CD4-positive, alpha-beta memory T cell (primary cell): ENCODE measurements at regions of chr17 and their contacts with region 1.

Region 1: GRCh38 chr17:74457146-74457819 is 9.2 kb upstream of the CD300A start:
- DNase-seq: peak; percentile 58 to 70 (median 64)
- H3K4me3 ChIP-seq: no peak overlapping the region
- H3K4me3 Mint-ChIP-seq: peak overlapping the region in 5 of 8 donors; percentile 26 to 71 (median 36)
- H3K27ac ChIP-seq: no peak overlapping the region
- H3K27ac Mint-ChIP-seq: peak overlapping the region in 5 of 7 donors; percentile 43 to 77 (median 61)
- H3K4me1 ChIP-seq: peaks cover 56% of the 10 kb centered on the region
- H3K4me1 Mint-ChIP-seq: peaks cover 18 to 57% (median 37%) of the 10 kb centered on the region in 4 donors
- H3K27me3 ChIP-seq: no peaks in the 10 kb centered on the region
- H3K27me3 Mint-ChIP-seq: no peaks in the 10 kb centered on the region

Region 2: DNA sequence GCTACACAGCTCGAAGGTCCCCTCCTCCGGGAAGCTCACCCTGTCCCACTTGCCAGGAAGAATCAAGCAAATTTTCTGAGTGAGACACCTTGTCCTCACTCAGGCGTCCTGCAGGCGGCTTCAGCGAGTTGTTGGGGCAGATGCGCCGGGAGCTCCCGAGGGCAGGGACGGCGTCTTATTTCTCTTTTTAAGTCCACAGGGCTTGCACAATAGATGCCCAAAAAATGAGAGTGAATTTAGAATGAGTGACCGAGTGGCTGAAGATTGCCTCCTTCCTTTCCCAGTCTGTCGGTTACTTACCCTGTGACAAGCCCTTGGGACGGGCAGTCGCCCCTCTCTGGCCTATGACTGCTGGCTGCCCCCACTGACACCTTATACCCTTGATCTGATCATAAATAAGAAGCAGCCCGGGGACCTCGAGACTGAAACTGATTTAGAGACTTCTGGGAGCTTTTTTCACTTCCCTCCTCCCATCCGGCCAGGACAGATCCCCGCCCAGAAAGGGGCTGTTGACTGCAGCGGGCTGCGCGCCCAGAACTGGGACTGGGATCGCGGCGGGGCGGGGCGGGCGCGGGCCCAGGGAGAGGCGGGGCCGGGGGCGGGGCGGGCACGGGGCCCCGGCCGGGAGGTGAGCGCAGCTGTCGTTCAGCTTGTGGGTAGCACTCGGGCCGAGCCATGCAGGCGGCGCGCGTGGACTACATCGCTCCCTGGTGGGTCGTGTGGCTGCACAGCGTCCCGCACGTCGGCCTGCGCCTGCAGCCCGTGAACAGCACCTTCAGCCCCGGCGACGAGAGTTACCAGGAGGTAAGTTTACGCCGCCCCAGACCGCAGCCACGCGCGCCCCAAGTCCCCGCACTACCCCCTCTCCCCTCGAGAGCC is 244.1 kb before region 1 on chr17 and contains the start of gene TTYH2:
- CTCF ChIA-PET with region 1: interaction called, 4 read pairs
- POLR2A ChIA-PET with region 1: interaction called, 3 read pairs
- intact Hi-C with region 1: loop called (anchors 1 kb)
- DNase-seq: peak; percentile 65 to 83 (median 71)
- H3K4me3 ChIP-seq: peak within 1 kb of the TSS; percentile 58
- H3K4me3 Mint-ChIP-seq: peak within 1 kb of the TSS; percentile 83 to 97 (median 91)
- H3K27ac ChIP-seq: peak within 1 kb of the TSS; percentile 52
- H3K27ac Mint-ChIP-seq: peak within 1 kb of the TSS; percentile 84 to 97 (median 92)
- H3K4me1 ChIP-seq: peaks cover 59% of the 10 kb centered on the region
- H3K4me1 Mint-ChIP-seq: peaks cover 26 to 67% (median 46%) of the 10 kb centered on the region in 4 donors
- H3K27me3 ChIP-seq: no peaks in the 10 kb centered on the region
- H3K27me3 Mint-ChIP-seq: no peaks in the 10 kb centered on the region
- total RNA-seq, gene TTYH2: 40.5 to 42.4 TPM

Region 3: GRCh38 chr17:74368092-74369081 is 88.9 kb before region 1 on chr17:
- CTCF ChIA-PET with region 1: interaction called, 82 read pairs
- POLR2A ChIA-PET with region 1: interaction called, 4 read pairs
- intact Hi-C with region 1: loop called (anchors 1 kb)
- DNase-seq: peak; percentile 53 to 72 (median 60)
- H3K4me3 ChIP-seq: no peak overlapping the region
- H3K4me3 Mint-ChIP-seq: peak overlapping the region; percentile 21 to 82 (median 66)
- H3K27ac ChIP-seq: no peak overlapping the region
- H3K27ac Mint-ChIP-seq: peak overlapping the region in 1 of 7 donors; percentile 53
- H3K4me1 ChIP-seq: peaks cover 16% of the 10 kb centered on the region
- H3K4me1 Mint-ChIP-seq: peaks cover 7 to 17% (median 12%) of the 10 kb centered on the region in 4 donors
- H3K27me3 ChIP-seq: no peaks in the 10 kb centered on the region
- H3K27me3 Mint-ChIP-seq: peaks cover 3 to 4% of the 10 kb centered on the region in 2 donors

Region 4: GRCh38 chr17:74437702-74438101 is 19.6 kb before region 1 on chr17:
- CTCF ChIA-PET with region 1: interaction called, 34 read pairs
- POLR2A ChIA-PET with region 1: interaction called, 4 read pairs
- intact Hi-C with region 1: no loop called
- DNase-seq: no peak
- H3K4me3 ChIP-seq: no peak overlapping the region
- H3K4me3 Mint-ChIP-seq: peak overlapping the region in 1 of 8 donors; percentile 46
- H3K27ac ChIP-seq: no peak overlapping the region
- H3K27ac Mint-ChIP-seq: no peak overlapping the region
- H3K4me1 ChIP-seq: no peaks in the 10 kb centered on the region
- H3K4me1 Mint-ChIP-seq: peaks cover 0 to 1% (median 0%) of the 10 kb centered on the region in 4 donors
- H3K27me3 ChIP-seq: peaks cover 6% of the 10 kb centered on the region
- H3K27me3 Mint-ChIP-seq: peaks cover 14 to 26% of the 10 kb centered on the region in 2 donors

Region 5: GRCh38 chr17:74467221-74467951 is 10.1 kb after region 1 on chr17:
- CTCF ChIA-PET with region 1: interaction called, 68 read pairs
- POLR2A ChIA-PET with region 1: interaction called, 18 read pairs
- intact Hi-C with region 1: no loop called
- DNase-seq: no peak
- H3K4me3 ChIP-seq: peak overlapping the region; percentile 54 to 55
- H3K4me3 Mint-ChIP-seq: no peak overlapping the region
- H3K27ac ChIP-seq: peak overlapping the region; percentile 51
- H3K27ac Mint-ChIP-seq: peak overlapping the region in 5 of 7 donors; percentile 64 to 96 (median 89)
- H3K4me1 ChIP-seq: peaks cover 75% of the 10 kb centered on the region
- H3K4me1 Mint-ChIP-seq: peaks cover 36 to 43% (median 40%) of the 10 kb centered on the region in 4 donors
- H3K27me3 ChIP-seq: no peaks in the 10 kb centered on the region
- H3K27me3 Mint-ChIP-seq: no peaks in the 10 kb centered on the region

Region 6: DNA sequence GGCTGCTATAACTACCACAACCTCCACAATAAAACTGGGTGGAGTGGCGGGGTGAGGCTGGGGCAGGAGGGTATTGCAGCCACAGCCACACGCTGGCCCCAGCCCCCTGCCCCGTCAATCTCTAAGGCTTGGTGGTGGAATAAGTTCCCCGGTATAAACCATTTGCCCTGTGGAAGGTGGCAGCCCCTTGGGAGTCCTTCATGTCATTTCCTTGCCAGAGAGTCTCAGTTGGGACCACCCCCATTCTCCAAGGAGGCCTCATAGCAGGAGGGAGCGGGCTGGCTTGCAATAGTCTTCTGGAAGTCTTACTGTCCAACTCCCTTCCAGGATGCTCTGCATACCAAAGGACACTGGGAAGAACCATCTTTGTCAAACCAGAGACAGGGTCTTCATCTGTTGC is 28.6 kb after region 1 on chr17:
- CTCF ChIA-PET with region 1: interaction called, 105 read pairs
- POLR2A ChIA-PET with region 1: interaction called, 5 read pairs
- intact Hi-C with region 1: no loop called
- DNase-seq: no peak
- H3K4me3 ChIP-seq: no peak overlapping the region
- H3K4me3 Mint-ChIP-seq: no peak overlapping the region
- H3K27ac ChIP-seq: no peak overlapping the region
- H3K27ac Mint-ChIP-seq: peak overlapping the region in 2 of 7 donors; percentile 7 to 27
- H3K4me1 ChIP-seq: peaks cover 1% of the 10 kb centered on the region
- H3K4me1 Mint-ChIP-seq: peaks cover 6 to 20% (median 15%) of the 10 kb centered on the region in 4 donors
- H3K27me3 ChIP-seq: no peaks in the 10 kb centered on the region
- H3K27me3 Mint-ChIP-seq: no peaks in the 10 kb centered on the region